Activated CD4-positive, alpha-beta T cell treated with anti-CD3 and anti-CD28 coated beads for 36 hours (primary cell): ENCODE measurements at regions of chr1 and their contacts with region 1.

Region 1: GRCh38 chr1:26900001-26900814 is at the start of gene GPATCH3:
- DNase-seq: peak; percentile 95
- ATAC-seq: peak; percentile 93
- H3K4me3 Mint-ChIP-seq: peak within 1 kb of the TSS; percentile 94
- H3K27ac Mint-ChIP-seq: peak within 1 kb of the TSS; percentile 100
- H3K4me1 Mint-ChIP-seq: peaks cover 17% of the 10 kb centered on the region
- H3K27me3 Mint-ChIP-seq: no peaks in the 10 kb centered on the region
- total RNA-seq, gene GPATCH3: 7.0 to 8.7 TPM

Region 2: GRCh38 chr1:26856181-26856580 is 44.0 kb before region 1 on chr1:
- CTCF ChIA-PET with region 1: no interaction called
- POLR2A ChIA-PET with region 1: no interaction called
- intact Hi-C with region 1: no loop called
- DNase-seq: no peak
- ATAC-seq: no peak
- H3K4me3 Mint-ChIP-seq: no peak overlapping the region
- H3K27ac Mint-ChIP-seq: no peak overlapping the region
- H3K4me1 Mint-ChIP-seq: no peaks in the 10 kb centered on the region
- H3K27me3 Mint-ChIP-seq: no peaks in the 10 kb centered on the region

Region 3: DNA sequence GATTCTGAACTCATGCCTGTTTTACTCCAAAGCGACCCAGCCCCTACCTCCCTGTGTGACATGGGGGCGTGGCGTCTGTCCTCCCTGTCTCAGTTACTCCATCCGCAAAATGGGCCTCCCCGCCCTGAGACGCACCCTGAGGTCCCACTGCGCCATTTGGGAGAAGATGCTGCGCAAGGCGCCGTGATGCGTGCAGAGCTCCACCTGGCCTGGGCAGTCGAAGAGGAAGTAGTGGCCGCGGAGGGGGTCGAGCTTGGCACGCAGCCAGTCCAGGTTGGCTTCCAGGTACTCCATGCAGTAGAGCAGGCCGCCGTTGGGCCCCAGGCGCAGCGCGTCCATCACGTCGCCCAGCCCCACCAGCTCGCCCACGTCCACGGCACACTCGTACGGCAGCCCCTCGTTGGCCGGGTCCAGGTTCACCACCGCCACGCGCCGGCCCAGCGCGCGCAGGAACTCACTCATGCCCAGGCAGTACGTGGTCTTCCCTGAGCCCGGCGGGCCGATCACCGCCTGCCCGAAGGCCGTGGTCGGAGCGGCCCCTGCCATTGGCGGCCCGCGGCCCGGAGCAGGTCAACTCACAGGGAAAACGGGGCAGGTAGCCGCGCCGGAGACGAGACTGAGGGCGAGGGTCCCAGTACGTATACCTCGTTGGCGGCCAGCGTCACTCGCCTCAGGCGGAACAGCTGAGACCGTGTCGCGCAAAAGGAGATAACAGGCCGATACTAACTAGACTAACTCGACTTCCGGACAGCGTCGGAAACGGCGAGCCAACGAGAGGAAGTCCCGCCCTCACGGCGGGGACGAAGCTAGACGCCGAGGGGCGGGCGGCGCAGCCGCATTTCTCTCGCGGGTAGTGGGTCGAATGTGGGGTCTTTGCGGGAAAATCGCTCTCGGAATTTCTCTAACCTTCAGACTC is 10.4 kb before region 1 on chr1 and contains the start of gene GPN2:
- CTCF ChIA-PET with region 1: interaction called, 20 read pairs
- POLR2A ChIA-PET with region 1: interaction called, 18 read pairs
- intact Hi-C with region 1: loop called (anchors 1 kb)
- DNase-seq: peak; percentile 86
- ATAC-seq: peak; percentile 97
- H3K4me3 Mint-ChIP-seq: peak within 1 kb of the TSS; percentile 92
- H3K27ac Mint-ChIP-seq: peak within 1 kb of the TSS; percentile 91
- H3K4me1 Mint-ChIP-seq: peaks cover 22% of the 10 kb centered on the region
- H3K27me3 Mint-ChIP-seq: no peaks in the 10 kb centered on the region
- total RNA-seq, gene GPN2: 44.3 to 45.6 TPM